Panc1 (cell line): ENCODE measurements at regions of chr15 and their contacts with region 1.

Region 1: GRCh38 chr15:33756961-33757360 is 211.3 kb upstream of the CHRM5 start:
- DNase-seq: no peak
- ATAC-seq: no peak
- H3K4me3 ChIP-seq: no peak overlapping the region
- H3K27ac ChIP-seq: no peak overlapping the region
- H3K4me1 ChIP-seq: no peaks in the 10 kb centered on the region
- H3K27me3 ChIP-seq: no peaks in the 10 kb centered on the region
- CTCF ChIP-seq: no peak

Region 2: DNA sequence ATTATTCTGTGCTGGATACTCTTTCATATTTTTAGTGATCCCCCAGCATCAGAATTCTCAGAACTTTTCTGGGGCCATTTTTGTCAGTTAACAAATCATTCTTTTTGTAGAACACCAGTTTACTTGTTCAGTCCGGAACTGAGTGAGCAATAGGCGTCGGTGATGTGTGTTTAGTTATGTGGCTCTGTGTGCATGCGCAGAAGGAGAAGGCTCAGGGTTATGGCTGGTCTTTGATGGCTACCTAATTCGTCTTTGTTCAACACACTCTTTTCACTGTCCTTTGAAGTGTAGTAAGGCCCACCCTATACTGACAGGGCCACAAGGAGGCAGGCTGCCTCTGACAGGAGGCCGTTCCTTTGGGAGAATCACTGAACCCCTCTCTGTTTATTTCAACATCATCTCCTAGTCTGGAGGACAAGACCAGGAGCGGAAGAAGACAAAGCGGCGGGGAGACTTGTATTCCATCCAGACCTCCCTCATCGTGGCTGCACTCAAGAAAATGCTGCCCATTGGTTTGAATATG is 53.2 kb after region 1 on chr15:
- CTCF ChIA-PET with region 1: no interaction called
- POLR2A ChIA-PET with region 1: no interaction called
- in situ Hi-C with region 1: no loop called
- intact Hi-C with region 1: loop called (anchors 10 kb)
- DNase-seq: no peak
- ATAC-seq: no peak
- H3K4me3 ChIP-seq: no peak overlapping the region
- H3K27ac ChIP-seq: no peak overlapping the region
- H3K4me1 ChIP-seq: no peaks in the 10 kb centered on the region
- H3K27me3 ChIP-seq: peaks cover under 1% of the 10 kb centered on the region; the same call in 1 of the 2 replicates
- CTCF ChIP-seq: no peak